ENCODE measurements at regions of chr22 and their contacts with region 1.

Region 1: DNA sequence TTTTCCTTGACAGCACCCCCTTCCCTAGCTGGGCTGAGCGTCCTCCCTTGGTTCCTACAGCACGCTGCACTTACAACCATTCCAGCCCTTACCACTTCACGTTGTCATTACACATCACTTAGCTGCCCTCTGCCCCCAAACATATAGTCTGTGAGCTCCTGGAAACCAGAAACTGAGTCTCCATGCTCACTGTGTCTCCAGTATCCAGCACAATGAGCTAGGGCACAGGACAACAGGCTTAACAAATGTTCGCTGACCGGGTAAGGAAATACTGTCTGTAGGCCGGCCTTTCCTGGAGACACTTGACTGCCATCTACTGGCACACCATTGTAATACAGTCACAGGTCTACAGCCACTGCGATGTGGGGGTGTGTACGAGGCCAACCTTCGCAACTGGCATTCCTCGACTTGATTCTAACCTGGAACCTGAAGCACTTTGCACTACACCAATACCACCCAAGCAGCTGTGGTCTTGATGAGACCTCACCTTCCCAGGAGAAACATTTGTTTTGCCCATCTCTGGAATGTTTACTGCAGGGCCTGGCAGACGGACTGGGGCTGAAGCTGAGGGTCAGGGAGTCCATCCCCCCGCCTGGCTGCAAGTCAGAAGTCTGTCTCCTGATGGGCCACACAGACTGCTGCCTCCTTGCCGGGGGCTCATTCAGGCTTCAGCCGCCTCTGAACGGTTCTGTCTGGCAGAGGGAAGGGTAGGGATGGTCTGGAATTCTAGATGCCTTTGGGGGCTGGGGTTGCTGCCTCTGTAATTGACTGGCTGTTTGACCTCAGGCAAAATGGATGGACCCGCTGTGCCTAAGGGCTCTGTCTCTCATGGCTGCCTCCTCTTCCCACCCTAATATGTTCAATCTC is 72.0 kb downstream of the SYN3 start:
- DNase-seq: peak; percentile 52
- ATAC-seq: peak; percentile 97

Region 2: DNA sequence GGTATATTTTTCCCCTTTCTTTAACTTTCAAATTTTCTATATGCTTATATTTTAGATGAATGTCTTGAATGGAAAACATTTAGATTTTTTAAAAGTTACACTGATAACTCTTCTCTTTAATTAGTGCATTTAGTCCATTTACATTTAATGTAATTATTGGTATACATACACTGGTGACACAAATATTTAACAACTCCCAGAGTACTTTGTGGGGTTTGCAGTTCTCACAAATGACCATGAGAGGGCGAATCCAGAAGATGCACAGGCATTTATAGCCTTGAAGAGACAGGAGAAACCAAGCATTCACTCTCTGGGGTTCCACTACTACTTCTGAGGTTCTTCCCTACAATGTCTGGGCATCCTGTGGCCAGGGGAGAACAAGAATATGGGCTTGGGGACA is 59.5 kb before region 1 on chr22:
- intact Hi-C with region 1: loop called (anchors 5 kb)
- DNase-seq: no peak
- ATAC-seq: peak; percentile 51

Region 3: DNA sequence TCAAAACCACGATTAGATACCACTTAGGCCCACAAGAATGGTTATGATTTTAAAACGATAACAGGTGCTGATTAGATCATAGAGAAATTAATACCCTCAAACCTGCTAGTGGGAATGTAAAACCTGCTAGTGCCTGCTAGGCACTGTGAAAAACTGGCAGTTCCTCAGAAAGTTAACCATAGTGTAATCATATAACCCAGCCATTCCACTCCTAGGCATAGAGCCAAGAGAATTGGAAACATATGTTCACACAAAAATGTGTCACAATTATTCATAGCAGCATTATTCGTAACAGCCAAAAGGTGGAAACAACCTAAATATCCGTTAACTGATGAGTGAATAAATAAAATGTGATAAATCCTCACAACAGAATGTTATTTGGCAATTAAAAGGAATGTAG is 194.2 kb after region 1 on chr22:
- intact Hi-C with region 1: no loop called
- DNase-seq: no peak
- ATAC-seq: no peak

Measured in Right ventricle myocardium superior (tissue), 1 donor.